ENCODE measurements at regions of chr1 and their contacts with region 1.

Region 1: GRCh38 chr1:96538111-96538641 is 183.4 kb upstream of the PTBP2 start:
- DNase-seq: no peak
- H3K4me3 ChIP-seq: no peak overlapping the region
- H3K27ac ChIP-seq: peak overlapping the region; percentile 78 to 85 (median 84)
- H3K4me1 ChIP-seq: peaks cover 20 to 54% (median 44%) of the 10 kb centered on the region in 4 donors
- H3K27me3 ChIP-seq: no peaks in the 10 kb centered on the region
- CTCF ChIP-seq: peak; percentile 32 to 48 (median 38)
- EP300 ChIP-seq: peak; percentile 74
- POLR2A ChIP-seq: no peak

Region 2: DNA sequence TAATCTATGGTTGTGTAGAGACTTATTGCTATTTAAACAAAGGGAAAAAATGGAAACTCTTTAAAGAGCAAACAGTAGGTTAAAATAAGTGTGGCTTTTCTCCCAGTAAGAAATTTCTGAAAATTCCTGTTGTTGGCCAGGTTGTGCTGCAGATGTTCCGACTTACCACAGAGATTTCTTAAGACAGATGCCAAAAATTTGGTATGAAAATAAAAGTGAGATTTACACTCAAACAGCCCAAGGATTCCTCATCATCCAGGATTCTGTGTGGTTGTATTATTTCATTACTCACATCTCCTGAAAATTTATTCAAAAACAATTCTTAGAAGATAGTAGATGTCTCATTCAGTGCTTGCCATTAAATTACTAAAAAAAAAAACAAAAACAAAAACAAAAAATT is 113.3 kb before region 1 on chr1:
- intact Hi-C with region 1: loop called (anchors 5 kb)
- DNase-seq: no peak
- H3K4me3 ChIP-seq: no peak overlapping the region
- H3K27ac ChIP-seq: no peak overlapping the region
- H3K4me1 ChIP-seq: peaks cover 0 to 10% (median 0%) of the 10 kb centered on the region in 4 donors
- H3K27me3 ChIP-seq: no peaks in the 10 kb centered on the region
- CTCF ChIP-seq: no peak
- EP300 ChIP-seq: no peak
- POLR2A ChIP-seq: no peak

Region 3: GRCh38 chr1:96492236-96492635 is 45.9 kb before region 1 on chr1:
- intact Hi-C with region 1: no loop called
- DNase-seq: no peak
- H3K4me3 ChIP-seq: no peak overlapping the region
- H3K27ac ChIP-seq: no peak overlapping the region
- H3K4me1 ChIP-seq: peaks cover 0 to 13% (median 10%) of the 10 kb centered on the region in 4 donors
- H3K27me3 ChIP-seq: no peaks in the 10 kb centered on the region
- CTCF ChIP-seq: no peak
- EP300 ChIP-seq: no peak
- POLR2A ChIP-seq: no peak

Region 4: GRCh38 chr1:96596226-96596922 is 58.2 kb after region 1 on chr1:
- intact Hi-C with region 1: no loop called
- DNase-seq: no peak
- H3K4me3 ChIP-seq: no peak overlapping the region
- H3K27ac ChIP-seq: no peak overlapping the region
- H3K4me1 ChIP-seq: peaks cover 0 to 40% (median 29%) of the 10 kb centered on the region in 4 donors
- H3K27me3 ChIP-seq: no peaks in the 10 kb centered on the region
- CTCF ChIP-seq: peak in 1 of 3 experiments; percentile 31
- EP300 ChIP-seq: no peak
- POLR2A ChIP-seq: no peak